Endothelial cell of umbilical vein (primary cell): ENCODE measurements at regions of chr4 and their contacts with region 1.

Region 1: DNA sequence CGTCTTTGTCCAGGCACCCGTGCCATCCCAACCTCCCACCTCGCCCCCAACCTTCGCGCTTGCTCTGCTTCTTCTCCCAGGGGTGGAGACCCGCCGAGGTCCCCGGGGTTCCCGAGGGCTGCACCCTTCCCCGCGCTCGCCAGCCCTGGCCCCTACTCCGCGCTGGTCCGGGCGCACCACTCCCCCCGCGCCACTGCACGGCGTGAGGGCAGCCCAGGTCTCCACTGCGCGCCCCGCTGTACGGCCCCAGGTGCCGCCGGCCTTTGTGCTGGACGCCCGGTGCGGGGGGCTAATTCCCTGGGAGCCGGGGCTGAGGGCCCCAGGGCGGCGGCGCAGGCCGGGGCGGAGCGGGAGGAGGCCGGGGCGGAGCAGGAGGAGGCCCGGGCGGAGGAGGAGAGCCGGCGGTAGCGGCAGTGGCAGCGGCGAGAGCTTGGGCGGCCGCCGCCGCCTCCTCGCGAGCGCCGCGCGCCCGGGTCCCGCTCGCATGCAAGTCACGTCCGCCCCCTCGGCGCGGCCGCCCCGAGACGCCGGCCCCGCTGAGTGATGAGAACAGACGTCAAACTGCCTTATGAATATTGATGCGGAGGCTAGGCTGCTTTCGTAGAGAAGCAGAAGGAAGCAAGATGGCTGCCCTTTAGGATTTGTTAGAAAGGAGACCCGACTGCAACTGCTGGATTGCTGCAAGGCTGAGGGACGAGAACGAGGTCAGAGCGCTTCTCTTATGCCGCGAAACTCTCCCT is at the start of gene TET2:
- DNase-seq: peak; percentile 90
- H3K4me3 ChIP-seq: peak within 1 kb of the TSS; percentile 79 to 100 (median 100)
- H3K27ac ChIP-seq: peak within 1 kb of the TSS; percentile 98
- H3K4me1 ChIP-seq: peaks cover 23% of the 10 kb centered on the region
- H3K27me3 ChIP-seq: no peaks in the 10 kb centered on the region
- CTCF ChIP-seq: no peak
- POLR2A ChIP-seq: peak; percentile 72
- total RNA-seq, gene TET2: 17.5 and 19.8 TPM in 2 replicates

Region 2: DNA sequence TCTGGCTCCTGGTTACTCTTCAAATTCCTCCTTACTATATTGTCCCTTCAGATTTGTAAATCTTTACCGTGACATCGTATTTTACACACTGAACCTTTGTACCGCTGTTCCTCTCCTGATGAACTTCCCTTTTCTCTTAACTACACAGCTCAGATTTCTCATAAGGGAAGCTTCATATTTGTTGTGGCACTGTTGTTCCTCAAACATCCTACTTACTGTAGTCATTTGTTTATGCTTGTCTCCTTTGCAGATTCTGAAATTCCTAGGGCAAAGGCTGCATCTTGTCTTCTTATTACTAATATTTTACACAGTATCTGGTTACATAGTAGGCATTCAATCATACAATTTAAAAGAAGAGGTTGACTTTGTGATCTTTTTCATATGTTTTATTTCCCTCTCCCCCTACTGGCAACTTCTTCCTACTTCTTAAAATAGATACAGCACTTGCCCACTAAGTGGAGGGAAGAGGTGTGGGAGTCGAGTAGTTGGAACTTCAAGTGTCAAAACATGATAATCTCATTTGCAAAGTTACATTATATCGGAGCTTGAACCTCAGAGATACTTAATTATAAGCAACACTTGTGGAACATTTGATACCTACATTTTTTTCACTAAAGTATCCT is 50.2 kb after region 1 on chr4:
- CTCF ChIA-PET with region 1: interaction called, 3 read pairs
- POLR2A ChIA-PET with region 1: no interaction called
- dilution Hi-C with region 1: no loop called
- intact Hi-C with region 1: loop called (anchors 1 kb)
- DNase-seq: no peak
- H3K4me3 ChIP-seq: no peak overlapping the region
- H3K27ac ChIP-seq: no peak overlapping the region
- H3K4me1 ChIP-seq: peaks cover 71% of the 10 kb centered on the region
- H3K27me3 ChIP-seq: no peaks in the 10 kb centered on the region
- CTCF ChIP-seq: peak in 1 of 2 donors; percentile 7
- POLR2A ChIP-seq: no peak

Region 3: DNA sequence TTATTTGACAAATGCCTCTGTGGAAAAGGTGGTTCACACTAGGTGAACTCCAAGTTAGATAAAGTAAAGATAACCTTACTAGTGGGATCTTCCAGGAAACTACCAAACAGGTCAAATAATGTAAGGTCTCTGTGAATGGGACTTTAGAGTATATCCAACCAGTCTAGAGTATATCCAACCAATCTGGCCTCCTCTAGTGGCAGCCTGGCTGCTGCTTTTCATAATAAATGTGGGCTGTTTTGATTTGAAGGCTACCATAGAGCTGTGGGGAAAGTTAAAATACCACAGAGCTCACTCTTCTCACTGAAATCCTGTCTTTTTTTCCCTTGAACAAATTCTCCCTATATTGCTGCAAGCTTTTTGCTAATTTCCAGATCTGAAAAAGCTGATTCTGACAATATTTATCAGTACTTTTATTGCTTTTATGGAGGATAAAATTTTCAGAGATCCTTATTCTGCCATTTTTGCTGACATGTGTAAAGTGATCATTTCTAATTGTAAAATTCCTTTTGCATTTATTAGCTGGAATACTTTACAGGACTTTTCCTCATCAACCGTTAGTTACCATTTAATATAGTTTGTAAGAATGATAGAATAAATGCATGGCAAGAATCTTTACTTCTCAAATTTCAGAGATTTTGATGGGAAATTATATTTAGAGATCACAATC is 111.5 kb after region 1 on chr4:
- CTCF ChIA-PET with region 1: no interaction called
- POLR2A ChIA-PET with region 1: no interaction called
- dilution Hi-C with region 1: no loop called
- intact Hi-C with region 1: loop called (anchors 5 kb)
- DNase-seq: no peak
- H3K4me3 ChIP-seq: no peak overlapping the region
- H3K27ac ChIP-seq: no peak overlapping the region
- H3K4me1 ChIP-seq: no peaks in the 10 kb centered on the region
- H3K27me3 ChIP-seq: no peaks in the 10 kb centered on the region
- CTCF ChIP-seq: no peak
- POLR2A ChIP-seq: no peak

Region 4: DNA sequence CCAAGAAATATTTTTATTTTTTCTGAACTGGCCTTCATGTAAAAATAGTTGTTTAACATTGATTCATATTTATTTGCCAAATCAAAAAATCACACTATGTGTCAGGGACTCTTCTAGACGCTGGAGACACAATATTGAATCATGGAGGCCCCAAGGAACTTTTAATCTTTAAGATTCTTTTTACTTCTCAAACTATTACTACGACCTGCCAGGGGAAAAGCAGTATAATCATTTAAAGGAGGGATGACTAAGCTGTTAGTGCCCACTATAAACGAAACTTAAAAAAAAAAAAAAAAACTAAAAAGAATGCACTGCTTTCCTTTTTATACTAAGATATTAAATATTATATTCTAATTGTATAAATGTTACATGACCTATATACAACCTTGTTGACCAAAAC is 242.7 kb after region 1 on chr4:
- CTCF ChIA-PET with region 1: no interaction called
- POLR2A ChIA-PET with region 1: no interaction called
- dilution Hi-C with region 1: no loop called
- intact Hi-C with region 1: loop called (anchors 1 kb)
- DNase-seq: no peak
- H3K4me3 ChIP-seq: no peak overlapping the region
- H3K27ac ChIP-seq: no peak overlapping the region
- H3K4me1 ChIP-seq: peaks cover 10% of the 10 kb centered on the region
- H3K27me3 ChIP-seq: no peaks in the 10 kb centered on the region
- CTCF ChIP-seq: no peak
- POLR2A ChIP-seq: no peak

Region 5: GRCh38 chr4:105708530-105709391 is 562.3 kb after region 1 on chr4 and contains the starts of genes GSTCD and INTS12:
- CTCF ChIA-PET with region 1: no interaction called
- POLR2A ChIA-PET with region 1: interaction called, 4 read pairs
- dilution Hi-C with region 1: no loop called
- intact Hi-C with region 1: loop called (anchors 2 kb)
- DNase-seq: peak; percentile 95
- H3K4me3 ChIP-seq: peak within 1 kb of the TSS; percentile 46 to 93 (median 93)
- H3K27ac ChIP-seq: peak within 1 kb of the TSS; percentile 61
- H3K4me1 ChIP-seq: peaks cover 16% of the 10 kb centered on the region
- H3K27me3 ChIP-seq: no peaks in the 10 kb centered on the region
- CTCF ChIP-seq: peak in 1 of 2 donors; percentile 0
- POLR2A ChIP-seq: peak; percentile 89
- total RNA-seq, gene GSTCD: 11.3 and 13.1 TPM in 2 replicates
- total RNA-seq, gene INTS12: 19.5 and 19.7 TPM in 2 replicates